Mammary epithelial cell (primary cell): ENCODE measurements at regions of chr9 and their contacts with region 1.

Region 1: DNA sequence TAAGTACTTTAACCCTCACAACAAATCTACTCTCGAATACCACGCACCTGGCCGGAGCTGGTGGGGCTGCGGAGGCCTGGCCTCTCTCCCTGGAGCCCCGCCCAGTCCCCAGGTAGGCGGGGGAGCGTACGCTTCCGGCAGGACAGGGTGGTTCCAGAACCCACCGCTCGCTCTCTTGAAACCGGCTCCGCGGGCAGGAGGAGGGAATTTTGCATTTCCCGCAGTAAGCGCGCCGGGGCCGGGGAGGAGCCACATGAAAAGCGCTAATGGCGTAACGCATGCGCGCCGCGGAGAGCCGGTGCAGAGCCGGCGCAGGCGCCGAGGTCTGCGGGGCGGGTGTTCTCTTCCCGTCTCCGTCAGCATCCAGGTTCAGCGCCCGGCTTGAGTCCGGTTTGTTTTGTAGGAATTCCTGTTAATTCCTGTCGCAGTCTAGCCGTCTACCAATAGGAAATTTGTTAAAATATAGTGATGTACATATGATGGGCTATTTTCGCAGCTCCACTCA is 20.8 kb downstream of the CAVIN4 start:
- DNase-seq: peak; percentile 78
- H3K4me3 ChIP-seq: peak overlapping the region; percentile 46 to 71 (median 54)
- H3K27ac ChIP-seq: no peak overlapping the region
- H3K4me1 ChIP-seq: peaks cover 11% of the 10 kb centered on the region
- H3K27me3 ChIP-seq: no peaks in the 10 kb centered on the region
- CTCF ChIP-seq: no peak

Region 2: GRCh38 chr9:99162759-99163364 is 1435.8 kb before region 1 on chr9:
- CTCF ChIA-PET with region 1: no interaction called
- dilution Hi-C with region 1: no loop called
- in situ Hi-C with region 1: no loop called
- intact Hi-C with region 1: loop called (anchors 5 kb)
- DNase-seq: no peak
- H3K4me3 ChIP-seq: no peak overlapping the region
- H3K27ac ChIP-seq: no peak overlapping the region
- H3K4me1 ChIP-seq: no peaks in the 10 kb centered on the region
- H3K27me3 ChIP-seq: no peaks in the 10 kb centered on the region
- CTCF ChIP-seq: peak; percentile 58 to 68

Region 3: GRCh38 chr9:99819856-99820684 is 778.6 kb before region 1 on chr9:
- CTCF ChIA-PET with region 1: no interaction called
- dilution Hi-C with region 1: no loop called
- in situ Hi-C with region 1: loop called in 1 of 2 experiments (anchors 25 kb)
- intact Hi-C with region 1: loop called (anchors 5 kb)
- DNase-seq: peak; percentile 91
- H3K4me3 ChIP-seq: peak overlapping the region; percentile 87 to 92 (median 92)
- H3K27ac ChIP-seq: peak overlapping the region; percentile 83
- H3K4me1 ChIP-seq: peaks cover 37% of the 10 kb centered on the region
- H3K27me3 ChIP-seq: peaks cover 12% of the 10 kb centered on the region
- CTCF ChIP-seq: peak in 1 of 2 donors; percentile 12

Region 4: GRCh38 chr9:100229561-100229960 is 369.1 kb before region 1 on chr9:
- CTCF ChIA-PET with region 1: no interaction called
- dilution Hi-C with region 1: no loop called
- in situ Hi-C with region 1: no loop called
- intact Hi-C with region 1: loop called (anchors 5 kb)
- DNase-seq: no peak
- H3K4me3 ChIP-seq: no peak overlapping the region
- H3K27ac ChIP-seq: peak overlapping the region; percentile 38
- H3K4me1 ChIP-seq: peaks cover 9% of the 10 kb centered on the region
- H3K27me3 ChIP-seq: no peaks in the 10 kb centered on the region
- CTCF ChIP-seq: no peak

Region 5: DNA sequence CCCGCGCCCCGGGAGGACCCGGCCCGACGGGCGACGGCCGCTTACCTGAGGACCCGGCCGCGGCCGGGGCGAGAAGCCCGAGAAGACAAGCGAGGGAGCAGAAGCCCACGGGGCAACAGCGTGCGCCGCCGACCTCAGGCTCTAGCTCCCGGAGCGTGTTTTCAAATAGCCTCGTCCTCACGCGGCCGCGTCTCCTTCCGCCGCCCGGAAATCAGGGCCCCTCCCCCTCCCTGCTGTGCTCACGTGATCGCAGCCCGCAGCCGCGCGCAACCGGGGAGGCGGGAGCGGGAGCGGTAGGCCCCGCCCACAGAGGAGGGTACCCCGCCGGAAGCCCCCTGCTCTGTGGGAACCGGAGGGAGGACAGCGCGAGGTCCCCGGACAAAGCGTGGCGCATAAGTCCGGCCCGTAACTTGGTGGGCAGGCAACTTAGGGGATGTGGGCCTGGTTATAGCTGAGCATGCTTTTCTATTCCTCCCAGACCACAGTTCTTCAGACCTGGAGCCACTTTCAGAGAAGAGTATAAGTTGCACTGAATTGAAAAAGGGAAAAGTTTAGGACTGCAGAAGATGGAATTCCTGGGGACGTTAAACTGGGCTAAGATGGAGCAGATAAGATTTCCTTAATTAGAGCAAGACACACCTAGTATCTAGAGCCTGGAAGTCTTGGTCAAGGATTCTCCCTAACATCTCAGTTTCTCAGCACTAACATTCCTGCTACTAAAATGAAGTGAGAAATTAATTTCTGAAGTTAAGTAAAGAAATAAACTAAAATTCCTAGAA is 245.8 kb before region 1 on chr9 and contains the start of gene TEX10:
- CTCF ChIA-PET with region 1: no interaction called
- dilution Hi-C with region 1: no loop called
- in situ Hi-C with region 1: loop called in 1 of 2 experiments (anchors 25 kb)
- intact Hi-C with region 1: loop called (anchors 1 kb)
- DNase-seq: peak; percentile 73
- H3K4me3 ChIP-seq: peak within 1 kb of the TSS; percentile 54 to 86 (median 78)
- H3K27ac ChIP-seq: peak within 1 kb of the TSS; percentile 74
- H3K4me1 ChIP-seq: peaks cover 13% of the 10 kb centered on the region
- H3K27me3 ChIP-seq: no peaks in the 10 kb centered on the region
- CTCF ChIP-seq: no peak
- total RNA-seq, gene TEX10: 30.3 to 36.8 TPM

Region 6: GRCh38 chr9:100714372-100715099 is 115.8 kb after region 1 on chr9:
- CTCF ChIA-PET with region 1: no interaction called
- dilution Hi-C with region 1: no loop called
- in situ Hi-C with region 1: no loop called
- intact Hi-C with region 1: loop called (anchors 1 kb)
- DNase-seq: peak; percentile 37
- H3K4me3 ChIP-seq: no peak overlapping the region
- H3K27ac ChIP-seq: no peak overlapping the region
- H3K4me1 ChIP-seq: no peaks in the 10 kb centered on the region
- H3K27me3 ChIP-seq: no peaks in the 10 kb centered on the region
- CTCF ChIP-seq: peak; percentile 87 to 95

Region 7: DNA sequence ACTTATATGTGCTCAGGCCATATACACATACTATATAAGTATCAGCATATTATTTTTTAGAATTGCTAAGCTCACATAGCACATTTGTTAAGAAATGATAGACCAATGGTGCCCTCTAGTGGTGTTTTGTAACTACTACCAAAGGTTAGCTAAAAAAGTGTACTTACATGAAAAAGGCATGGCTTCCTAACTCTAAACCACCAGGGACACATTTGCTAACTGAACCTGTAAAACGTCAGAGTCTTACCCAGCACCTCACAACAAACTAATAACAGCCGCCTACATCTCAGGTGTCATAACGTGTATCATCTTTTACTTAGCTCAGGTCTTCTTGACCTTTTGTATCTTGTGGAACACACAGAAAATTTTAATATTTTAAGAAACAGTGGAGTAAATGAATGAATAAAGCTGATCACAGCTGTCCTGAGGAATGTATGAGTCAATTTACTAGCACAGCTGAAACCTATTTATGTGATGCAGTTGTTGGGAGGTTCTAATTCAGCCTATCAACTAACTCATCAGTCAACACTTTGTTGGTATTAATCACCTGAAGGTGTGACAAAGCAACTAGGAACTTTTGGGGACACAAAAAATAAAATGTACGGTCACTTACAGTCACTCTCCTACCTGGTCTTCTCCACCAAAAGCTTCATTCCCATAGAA is 713.2 kb after region 1 on chr9:
- CTCF ChIA-PET with region 1: interaction called, 22 read pairs
- dilution Hi-C with region 1: no loop called
- in situ Hi-C with region 1: loop called (anchors 10 to 25 kb)
- intact Hi-C with region 1: loop called (anchors 1 kb)
- DNase-seq: peak; percentile 58
- H3K4me3 ChIP-seq: no peak overlapping the region
- H3K27ac ChIP-seq: no peak overlapping the region
- H3K4me1 ChIP-seq: peaks cover 15% of the 10 kb centered on the region
- H3K27me3 ChIP-seq: no peaks in the 10 kb centered on the region
- CTCF ChIP-seq: peak; percentile 48 to 59